Motor neuron (in vitro differentiated cells): ENCODE measurements at regions of chr5 and their contacts with region 1.

Region 1: GRCh38 chr5:157328277-157328912 is 62.5 kb downstream of the CYFIP2 start:
- ATAC-seq: peak; percentile 100
- H3K4me3 ChIP-seq: no peak overlapping the region
- H3K27ac ChIP-seq: no peak overlapping the region
- H3K4me1 ChIP-seq: no peaks in the 10 kb centered on the region

Region 2: GRCh38 chr5:157476702-157477408 is 148.5 kb after region 1 on chr5:
- in situ Hi-C with region 1: loop called in 1 of 9 experiments (anchors 25 kb)
- ATAC-seq: peak; percentile 79 to 98 (median 89)
- H3K4me3 ChIP-seq: no peak overlapping the region
- H3K27ac ChIP-seq: no peak overlapping the region
- H3K4me1 ChIP-seq: no peaks in the 10 kb centered on the region

Region 3: DNA sequence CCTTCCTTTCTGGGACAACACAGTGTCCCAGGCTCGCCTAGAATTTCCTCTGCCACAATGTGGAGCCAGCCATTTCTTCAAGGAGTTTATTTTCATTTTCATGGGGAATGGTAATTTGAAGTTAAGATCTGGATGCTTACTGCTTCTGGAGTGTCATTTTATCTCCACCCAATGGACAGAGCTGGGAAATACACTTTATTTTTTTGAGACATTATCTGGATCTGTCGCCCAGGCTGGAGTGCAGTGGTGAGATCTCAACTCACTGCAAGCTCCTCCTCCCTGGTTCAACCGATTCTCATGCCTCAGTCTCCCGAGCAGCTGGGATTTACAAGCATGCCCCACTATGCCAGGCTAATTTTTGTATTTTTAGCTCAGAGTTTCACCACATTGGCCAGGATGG is 390.1 kb after region 1 on chr5:
- in situ Hi-C with region 1: loop called in 2 of 9 experiments (anchors 25 kb)
- ATAC-seq: peak; percentile 68 to 93 (median 82)
- H3K4me3 ChIP-seq: no peak overlapping the region
- H3K27ac ChIP-seq: no peak overlapping the region
- H3K4me1 ChIP-seq: no peaks in the 10 kb centered on the region

Region 4: GRCh38 chr5:157743163-157744050 is 415.0 kb after region 1 on chr5 and contains the start of gene LSM11:
- in situ Hi-C with region 1: loop called in 4 of 9 experiments (anchors 25 kb)
- ATAC-seq: peak; percentile 74 to 93 (median 90)
- H3K4me3 ChIP-seq: peak within 1 kb of the TSS; percentile 59 to 88 (median 79)
- H3K27ac ChIP-seq: peak within 1 kb of the TSS; percentile 18 to 45
- H3K4me1 ChIP-seq: peaks cover 0 to 6% of the 10 kb centered on the region in 2 donors
- total RNA-seq, gene LSM11: 2.0 to 22.2 (median 11.4) TPM